Endothelial cell of umbilical vein (primary cell): ENCODE measurements at regions of chr14 and their contacts with region 1.

Region 1: GRCh38 chr14:33792720-33793368 is 158.0 kb downstream of the EGLN3 start:
- DNase-seq: peak; percentile 80
- H3K4me3 ChIP-seq: peak overlapping the region in 1 of 3 experiments; percentile 30
- H3K27ac ChIP-seq: no peak overlapping the region
- H3K4me1 ChIP-seq: peaks cover 25% of the 10 kb centered on the region
- H3K27me3 ChIP-seq: no peaks in the 10 kb centered on the region
- CTCF ChIP-seq: peak; percentile 89 to 91
- POLR2A ChIP-seq: no peak

Region 2: GRCh38 chr14:32710731-32711680 is 1081.8 kb before region 1 on chr14:
- CTCF ChIA-PET with region 1: interaction called, 22 read pairs
- POLR2A ChIA-PET with region 1: no interaction called
- dilution Hi-C with region 1: no loop called
- intact Hi-C with region 1: loop called (anchors 1 kb)
- DNase-seq: peak; percentile 51
- H3K4me3 ChIP-seq: no peak overlapping the region
- H3K27ac ChIP-seq: no peak overlapping the region
- H3K4me1 ChIP-seq: no peaks in the 10 kb centered on the region
- H3K27me3 ChIP-seq: peaks cover 1 to 3% of the 10 kb centered on the region in 2 experiments
- CTCF ChIP-seq: peak; percentile 25 to 47
- POLR2A ChIP-seq: no peak

Region 3: GRCh38 chr14:33280646-33281045 is 512.2 kb before region 1 on chr14:
- CTCF ChIA-PET with region 1: no interaction called
- POLR2A ChIA-PET with region 1: no interaction called
- dilution Hi-C with region 1: no loop called
- intact Hi-C with region 1: loop called (anchors 10 kb)
- DNase-seq: no peak
- H3K4me3 ChIP-seq: no peak overlapping the region
- H3K27ac ChIP-seq: no peak overlapping the region
- H3K4me1 ChIP-seq: no peaks in the 10 kb centered on the region
- H3K27me3 ChIP-seq: no peaks in the 10 kb centered on the region
- CTCF ChIP-seq: no peak
- POLR2A ChIP-seq: no peak

Region 4: DNA sequence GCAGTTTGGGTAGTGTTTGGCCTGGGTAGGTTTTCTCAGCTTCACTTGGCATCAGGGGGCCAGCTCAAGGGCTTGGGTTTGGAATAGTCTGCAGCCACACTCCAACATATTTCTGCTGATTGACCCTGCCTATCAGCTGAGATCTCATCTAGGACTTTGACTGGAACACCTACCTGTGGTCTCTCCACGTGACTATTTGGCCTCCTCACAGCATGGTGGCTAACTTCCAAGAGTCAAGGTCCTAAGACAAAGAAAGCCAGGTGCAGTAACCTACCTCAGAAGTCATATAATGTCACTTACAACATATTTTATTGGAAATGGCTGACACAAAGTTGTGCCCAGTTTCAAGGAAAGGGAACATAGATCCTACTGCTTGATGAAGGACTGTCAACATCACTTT is 322.9 kb before region 1 on chr14:
- CTCF ChIA-PET with region 1: interaction called, 128 read pairs
- POLR2A ChIA-PET with region 1: interaction called, 5 read pairs
- dilution Hi-C with region 1: loop called (anchors 25 kb)
- intact Hi-C with region 1: loop called (anchors 1 kb)
- DNase-seq: no peak
- H3K4me3 ChIP-seq: no peak overlapping the region
- H3K27ac ChIP-seq: no peak overlapping the region
- H3K4me1 ChIP-seq: no peaks in the 10 kb centered on the region
- H3K27me3 ChIP-seq: no peaks in the 10 kb centered on the region
- CTCF ChIP-seq: no peak
- POLR2A ChIP-seq: no peak

Region 5: GRCh38 chr14:33569821-33570687 is 222.8 kb before region 1 on chr14:
- CTCF ChIA-PET with region 1: interaction called, 23 read pairs
- POLR2A ChIA-PET with region 1: no interaction called
- dilution Hi-C with region 1: no loop called
- intact Hi-C with region 1: loop called (anchors 1 kb)
- DNase-seq: peak; percentile 35
- H3K4me3 ChIP-seq: no peak overlapping the region
- H3K27ac ChIP-seq: peak overlapping the region; percentile 100
- H3K4me1 ChIP-seq: peaks cover 61% of the 10 kb centered on the region
- H3K27me3 ChIP-seq: no peaks in the 10 kb centered on the region
- CTCF ChIP-seq: no peak
- POLR2A ChIP-seq: no peak

Region 6: GRCh38 chr14:33764876-33765650 is 27.8 kb before region 1 on chr14:
- CTCF ChIA-PET with region 1: interaction called, 14 read pairs
- POLR2A ChIA-PET with region 1: no interaction called
- dilution Hi-C with region 1: no loop called
- intact Hi-C with region 1: no loop called
- DNase-seq: peak; percentile 64
- H3K4me3 ChIP-seq: no peak overlapping the region
- H3K27ac ChIP-seq: no peak overlapping the region
- H3K4me1 ChIP-seq: peaks cover 36% of the 10 kb centered on the region
- H3K27me3 ChIP-seq: no peaks in the 10 kb centered on the region
- CTCF ChIP-seq: no peak
- POLR2A ChIP-seq: no peak